Calu3 (cell line): ENCODE measurements at regions of chr7 and their contacts with region 1.

Region 1: GRCh38 chr7:158587162-158588084 is at the start of gene PTPRN2:
- DNase-seq: peak; percentile 76
- H3K4me3 Mint-ChIP-seq: peak within 1 kb of the TSS; percentile 53
- H3K27ac Mint-ChIP-seq: no peak within 1 kb of the TSS
- H3K4me1 Mint-ChIP-seq: peaks cover 14% of the 10 kb centered on the region
- H3K27me3 Mint-ChIP-seq: peaks cover 48% of the 10 kb centered on the region
- CTCF ChIP-seq: no peak
- total RNA-seq, gene PTPRN2: 1.9 and 2.0 TPM in 2 replicates

Region 2: GRCh38 chr7:158431941-158432347 is 155.5 kb before region 1 on chr7:
- CTCF ChIA-PET with region 1: no interaction called
- intact Hi-C with region 1: loop called (anchors 10 kb)
- DNase-seq: peak; percentile 84
- H3K4me3 Mint-ChIP-seq: peak overlapping the region; percentile 57
- H3K27ac Mint-ChIP-seq: peak overlapping the region; percentile 93
- H3K4me1 Mint-ChIP-seq: peaks cover 21% of the 10 kb centered on the region
- H3K27me3 Mint-ChIP-seq: no peaks in the 10 kb centered on the region
- CTCF ChIP-seq: no peak

Region 3: DNA sequence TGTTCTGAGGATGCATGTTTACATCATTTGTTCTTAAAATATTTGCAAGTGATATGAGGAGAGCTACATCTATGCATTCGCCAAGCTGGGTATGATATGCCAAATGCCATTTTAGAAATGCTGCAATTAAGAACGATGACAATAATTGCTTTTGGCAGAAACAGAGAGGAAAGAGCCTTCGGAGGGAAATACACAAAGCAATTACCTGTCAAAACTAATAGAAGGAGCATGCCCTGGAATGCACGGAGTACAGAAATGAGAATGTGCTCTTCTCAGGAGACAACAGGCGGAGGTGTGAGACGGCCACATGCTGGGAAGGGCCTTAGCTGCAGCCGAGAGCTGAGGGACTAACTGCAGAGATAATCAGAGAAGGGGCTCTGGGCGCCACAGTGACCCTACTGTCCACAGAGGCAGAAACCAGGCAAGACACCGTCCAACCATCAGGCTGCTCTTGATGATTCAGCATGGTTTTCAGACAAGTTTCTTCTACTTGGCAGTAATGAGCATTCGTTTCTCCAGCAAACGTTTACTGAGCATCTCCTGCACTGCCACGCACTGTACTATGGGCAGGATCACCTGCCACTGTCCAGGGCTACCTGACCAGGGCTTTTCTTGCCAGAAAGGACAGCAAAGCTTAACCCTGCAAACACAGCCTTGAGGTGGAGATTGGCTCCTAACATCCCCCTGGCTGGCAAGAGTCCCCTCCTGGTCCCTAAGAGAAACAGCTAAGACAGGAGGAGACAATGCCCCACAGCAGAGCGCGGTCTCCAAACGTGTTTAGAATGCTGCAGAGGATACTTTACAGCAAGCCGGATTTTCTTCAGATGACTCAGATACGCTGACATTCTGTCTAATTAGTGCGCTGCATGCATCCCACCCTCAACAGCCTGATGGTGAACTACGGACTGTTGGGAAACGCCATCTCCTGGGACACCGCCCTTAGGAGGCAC is 539.2 kb after region 1 on chr7:
- CTCF ChIA-PET with region 1: no interaction called
- intact Hi-C with region 1: no loop called
- DNase-seq: no peak
- H3K4me3 Mint-ChIP-seq: no peak overlapping the region
- H3K27ac Mint-ChIP-seq: no peak overlapping the region
- H3K4me1 Mint-ChIP-seq: no peaks in the 10 kb centered on the region
- H3K27me3 Mint-ChIP-seq: peaks cover 14% of the 10 kb centered on the region
- CTCF ChIP-seq: no peak